Thyroid gland (tissue), 4 donors: ENCODE measurements at regions of chr7 and their contacts with region 1.

Region 1: GRCh38 chr7:43693687-43694398 is 35.5 kb downstream of the COA1 start:
- DNase-seq: no peak
- H3K4me3 ChIP-seq: no peak overlapping the region
- H3K27ac ChIP-seq: no peak overlapping the region
- H3K4me1 ChIP-seq: no peaks in the 10 kb centered on the region
- H3K27me3 ChIP-seq: no peaks in the 10 kb centered on the region
- CTCF ChIP-seq: no peak
- POLR2A ChIP-seq: no peak

Region 2: GRCh38 chr7:43582503-43583423 is 111.1 kb before region 1 on chr7 and contains the start of gene STK17A:
- intact Hi-C with region 1: loop called (anchors 2 kb)
- DNase-seq: peak; percentile 90 to 93
- H3K4me3 ChIP-seq: peak within 1 kb of the TSS; percentile 60 to 95 (median 91)
- H3K27ac ChIP-seq: peak within 1 kb of the TSS; percentile 78 to 93 (median 82)
- H3K4me1 ChIP-seq: peaks cover 11 to 15% of the 10 kb centered on the region in 2 donors
- H3K27me3 ChIP-seq: no peaks in the 10 kb centered on the region
- CTCF ChIP-seq: peak; percentile 94 to 100 (median 100)
- POLR2A ChIP-seq: peak; percentile 16 to 85
- total RNA-seq, gene STK17A: 7.9 to 22.9 (median 16.4) TPM

Region 3: GRCh38 chr7:43647673-43648472 is 46.0 kb before region 1 on chr7:
- intact Hi-C with region 1: loop called (anchors 10 kb)
- DNase-seq: peak; percentile 16 to 25
- H3K4me3 ChIP-seq: no peak overlapping the region
- H3K27ac ChIP-seq: peak overlapping the region; percentile 76 to 77 (median 76)
- H3K4me1 ChIP-seq: peaks cover 8 to 62% of the 10 kb centered on the region in 2 donors
- H3K27me3 ChIP-seq: no peaks in the 10 kb centered on the region
- CTCF ChIP-seq: no peak
- POLR2A ChIP-seq: no peak

Region 4: GRCh38 chr7:43791665-43792064 is 97.8 kb after region 1 on chr7:
- intact Hi-C with region 1: no loop called
- DNase-seq: no peak
- H3K4me3 ChIP-seq: no peak overlapping the region
- H3K27ac ChIP-seq: no peak overlapping the region
- H3K4me1 ChIP-seq: no peaks in the 10 kb centered on the region
- H3K27me3 ChIP-seq: no peaks in the 10 kb centered on the region
- CTCF ChIP-seq: no peak
- POLR2A ChIP-seq: no peak

Region 5: GRCh38 chr7:43844031-43844656 is 150.3 kb after region 1 on chr7:
- intact Hi-C with region 1: no loop called
- DNase-seq: no peak
- H3K4me3 ChIP-seq: no peak overlapping the region
- H3K27ac ChIP-seq: no peak overlapping the region
- H3K4me1 ChIP-seq: no peaks in the 10 kb centered on the region
- H3K27me3 ChIP-seq: no peaks in the 10 kb centered on the region
- CTCF ChIP-seq: no peak
- POLR2A ChIP-seq: no peak